Breast epithelium (tissue), 4 donors: ENCODE measurements at regions of chr12 and their contacts with region 1.

Region 1: DNA sequence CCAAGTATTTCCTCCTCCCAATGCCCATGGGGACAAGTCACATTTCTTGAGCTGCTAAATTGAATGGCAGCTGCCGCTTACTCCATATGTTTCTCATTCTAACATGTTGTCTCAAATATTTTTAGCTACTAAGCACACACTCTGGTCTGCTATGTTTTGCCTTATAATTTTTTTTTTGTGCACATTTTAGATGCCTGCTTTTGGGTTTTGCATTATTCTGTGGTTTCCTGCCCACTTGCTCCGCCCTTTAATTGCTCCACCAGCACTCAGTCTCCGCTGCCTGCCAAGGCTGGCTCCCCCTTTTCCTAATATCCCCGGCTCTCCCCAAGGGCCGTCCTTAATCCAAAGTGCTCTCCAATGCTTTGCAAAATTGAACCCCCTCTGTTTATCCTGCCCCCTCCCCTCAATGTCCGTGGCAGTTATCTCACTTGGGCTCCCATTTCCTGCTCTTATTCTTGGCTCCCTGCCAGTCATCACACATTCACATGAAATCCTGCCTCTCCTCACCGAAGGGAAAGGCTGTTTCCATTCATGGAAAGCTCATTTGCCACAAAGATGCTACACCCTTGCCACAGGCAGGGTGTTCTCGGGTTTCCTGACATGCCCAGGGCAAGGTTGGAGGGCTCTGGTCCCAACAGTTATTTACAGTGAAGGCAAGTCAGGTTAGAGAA is 79.4 kb downstream of the C12orf75 start:
- DNase-seq: no peak
- H3K4me3 ChIP-seq: no peak overlapping the region
- H3K27ac ChIP-seq: no peak overlapping the region
- H3K4me1 ChIP-seq: no peaks in the 10 kb centered on the region
- H3K27me3 ChIP-seq: no peaks in the 10 kb centered on the region
- CTCF ChIP-seq: no peak
- POLR2A ChIP-seq: no peak

Region 2: DNA sequence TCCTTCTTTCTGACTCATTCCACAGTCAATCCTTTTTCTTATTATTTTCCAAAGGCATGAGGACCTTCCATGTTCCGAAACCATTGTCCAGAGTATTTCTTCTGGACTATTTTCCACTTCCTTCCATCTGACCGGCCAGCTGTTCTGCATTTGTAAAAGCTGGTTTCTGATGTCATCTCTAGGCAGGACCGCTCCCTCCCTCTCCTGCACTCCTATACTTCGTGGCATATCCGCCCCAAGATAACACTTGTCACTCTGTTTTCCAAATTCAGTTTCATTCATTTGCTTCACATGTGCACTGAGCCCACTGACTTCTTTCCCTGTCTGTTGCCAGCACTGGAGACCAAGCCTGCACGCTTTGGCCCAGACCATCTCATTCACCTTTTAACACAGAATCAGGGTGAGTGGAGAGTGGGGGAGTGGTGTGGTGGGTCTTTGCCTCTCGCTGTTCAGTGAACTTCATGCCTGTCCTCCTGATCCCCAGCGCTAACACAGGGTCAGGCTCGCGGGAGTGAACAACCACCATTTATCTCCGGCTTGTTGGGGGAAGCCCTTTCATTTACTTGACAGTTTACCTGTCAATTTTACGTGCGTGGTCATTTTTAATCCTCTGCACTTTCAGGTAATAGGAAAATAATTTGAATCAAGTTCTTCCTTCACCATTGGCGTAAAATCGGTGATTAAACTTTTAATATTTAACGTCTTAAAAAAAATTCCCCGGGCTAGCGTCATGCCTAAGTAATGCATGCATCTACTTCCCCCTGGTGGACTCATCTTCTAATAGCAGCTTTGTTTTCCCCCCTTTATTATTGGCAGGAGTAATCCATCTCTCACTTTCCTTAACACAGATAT is 26.9 kb before region 1 on chr12:
- intact Hi-C with region 1: no loop called
- DNase-seq: no peak
- H3K4me3 ChIP-seq: peak overlapping the region; percentile 7 to 46 (median 16)
- H3K27ac ChIP-seq: no peak overlapping the region
- H3K4me1 ChIP-seq: no peaks in the 10 kb centered on the region
- H3K27me3 ChIP-seq: no peaks in the 10 kb centered on the region
- CTCF ChIP-seq: peak; percentile 56 to 91 (median 89)
- POLR2A ChIP-seq: no peak

Region 3: DNA sequence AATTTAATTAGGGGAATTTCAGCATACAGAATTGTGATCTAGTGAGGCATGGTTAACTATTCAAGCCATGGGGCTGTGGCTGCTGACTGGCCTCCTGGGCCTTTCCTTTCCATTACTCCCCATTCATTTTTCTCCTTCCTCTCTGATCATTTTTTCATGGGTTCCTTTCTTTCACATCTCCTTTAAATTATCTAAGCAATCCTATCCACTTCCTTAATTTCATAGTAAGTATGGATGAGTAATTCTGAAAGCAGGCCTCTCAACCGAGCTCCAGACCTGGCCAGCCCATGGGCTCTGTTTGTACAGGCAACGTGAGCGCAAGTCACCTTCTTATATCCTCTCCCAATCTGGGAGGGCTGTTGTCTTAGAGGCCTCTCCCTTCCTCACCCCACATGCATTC is 824.5 kb after region 1 on chr12:
- intact Hi-C with region 1: loop called (anchors 10 kb)
- DNase-seq: no peak
- H3K4me3 ChIP-seq: no peak overlapping the region
- H3K27ac ChIP-seq: no peak overlapping the region
- H3K4me1 ChIP-seq: no peaks in the 10 kb centered on the region
- H3K27me3 ChIP-seq: no peaks in the 10 kb centered on the region
- CTCF ChIP-seq: no peak
- POLR2A ChIP-seq: no peak